ENCODE measurements at regions of chrX and their contacts with region 1.

Region 1: DNA sequence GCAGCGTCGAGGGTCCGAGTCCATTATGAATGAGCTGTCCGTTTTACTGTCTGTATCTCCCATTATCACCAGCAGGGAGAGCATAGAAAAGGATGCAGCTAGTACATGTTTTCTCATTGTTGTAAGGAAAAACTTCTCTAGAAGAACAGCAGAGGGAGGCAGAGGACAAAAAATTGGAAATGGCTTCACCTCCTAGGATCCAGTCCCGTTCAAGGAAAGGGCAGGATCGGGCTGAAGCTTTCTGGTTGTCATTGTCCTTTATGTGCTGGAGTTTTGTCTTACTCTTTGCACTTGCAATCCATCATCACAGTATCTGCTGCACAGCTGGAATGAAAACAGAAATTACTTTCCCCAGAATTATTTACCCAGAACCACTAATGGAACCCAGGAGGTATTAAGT is 14.7 kb downstream of the NDP start:
- DNase-seq: peak; percentile 21
- CTCF ChIP-seq: peak; percentile 46

Region 2: GRCh38 chrX:45186643-45187026 is 1228.1 kb after region 1 on chrX:
- CTCF ChIA-PET with region 1: interaction called, 10 read pairs
- POLR2A ChIA-PET with region 1: no interaction called
- DNase-seq: no peak
- CTCF ChIP-seq: no peak